Cardiac septum (tissue), 1 donor: ENCODE measurements at regions of chr2 and their contacts with region 1.

Region 1: DNA sequence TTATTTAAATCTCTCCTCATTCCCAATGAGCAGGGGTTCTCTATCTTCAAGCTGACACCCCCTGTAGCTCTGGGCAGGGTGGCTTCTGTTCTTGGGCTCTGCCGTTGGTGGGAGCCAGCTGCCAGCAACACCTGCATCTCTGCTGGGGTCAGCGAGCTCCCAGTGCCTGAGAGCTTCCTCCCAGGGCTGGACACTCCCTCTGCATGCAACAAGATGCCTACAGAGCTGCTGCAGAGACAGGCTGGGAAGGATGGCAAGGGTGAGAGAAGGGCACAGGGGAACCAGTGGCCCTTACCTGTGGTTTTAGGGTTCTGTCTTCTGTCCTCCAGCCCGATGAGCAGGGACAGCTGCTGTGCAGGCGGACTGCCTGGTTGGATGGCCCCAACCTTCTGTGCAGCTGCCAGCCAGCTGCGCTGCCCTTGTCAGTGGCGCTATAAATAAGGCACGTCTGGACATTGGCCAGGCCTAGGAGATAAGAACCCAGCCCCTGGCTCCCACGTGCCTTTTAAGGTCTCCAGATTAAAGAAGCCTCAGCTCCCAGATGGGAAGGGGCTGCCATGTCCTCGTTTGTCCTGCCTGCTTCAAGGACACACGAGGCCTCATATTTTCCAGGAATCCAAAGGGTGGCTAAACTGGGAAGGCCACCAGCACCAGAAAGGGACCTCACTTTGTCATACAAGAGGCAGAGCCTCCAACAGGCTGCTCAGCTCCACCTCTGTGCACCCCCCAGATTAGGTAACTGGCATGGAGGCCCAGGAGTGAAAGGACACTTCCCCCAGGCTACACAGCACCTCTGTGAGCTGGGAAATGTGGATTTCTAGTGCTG is 39.5 kb upstream of the FHL2 start:
- DNase-seq: peak; percentile 87

Region 2: DNA sequence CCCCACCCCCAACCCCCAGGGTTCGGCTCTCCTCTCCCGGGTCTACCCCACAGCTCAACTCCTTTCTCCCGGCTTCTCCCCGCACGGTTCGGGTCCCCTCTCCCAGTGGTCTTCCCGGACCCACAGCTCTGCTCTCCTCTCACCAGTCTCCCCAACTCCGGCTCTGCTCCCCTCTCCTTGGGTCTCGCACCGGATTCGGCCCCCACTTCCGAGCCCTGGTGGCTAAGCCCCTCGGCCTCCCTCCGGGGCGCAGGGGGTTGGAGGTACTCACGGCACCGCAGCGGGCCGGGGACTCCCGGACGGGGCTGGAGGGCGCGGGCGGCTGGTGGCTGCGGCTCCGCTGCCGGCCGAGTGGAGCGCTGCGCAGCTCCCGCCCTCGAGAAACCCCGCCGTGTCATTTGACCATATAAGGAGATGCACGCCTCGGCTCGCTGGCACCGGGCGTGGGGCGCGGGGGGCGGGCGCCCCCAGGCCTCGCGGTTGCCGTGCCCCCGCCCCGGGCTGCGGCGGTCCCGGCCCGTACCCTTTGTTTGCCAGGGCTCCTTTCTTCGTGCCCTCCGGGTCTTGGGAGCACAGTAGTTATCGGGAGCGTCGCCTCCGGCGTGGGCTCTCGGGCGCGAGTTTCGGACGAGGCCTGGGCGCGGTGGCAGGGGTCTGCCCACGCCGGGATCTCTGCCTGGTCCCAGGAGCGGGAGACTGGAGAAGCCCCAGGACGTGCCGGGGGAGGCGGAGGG is 39.5 kb before region 1 on chr2 and contains the start of gene FHL2:
- intact Hi-C with region 1: loop called (anchors 5 kb)
- DNase-seq: peak; percentile 84
- total RNA-seq, gene FHL2: 467 TPM

Region 3: DNA sequence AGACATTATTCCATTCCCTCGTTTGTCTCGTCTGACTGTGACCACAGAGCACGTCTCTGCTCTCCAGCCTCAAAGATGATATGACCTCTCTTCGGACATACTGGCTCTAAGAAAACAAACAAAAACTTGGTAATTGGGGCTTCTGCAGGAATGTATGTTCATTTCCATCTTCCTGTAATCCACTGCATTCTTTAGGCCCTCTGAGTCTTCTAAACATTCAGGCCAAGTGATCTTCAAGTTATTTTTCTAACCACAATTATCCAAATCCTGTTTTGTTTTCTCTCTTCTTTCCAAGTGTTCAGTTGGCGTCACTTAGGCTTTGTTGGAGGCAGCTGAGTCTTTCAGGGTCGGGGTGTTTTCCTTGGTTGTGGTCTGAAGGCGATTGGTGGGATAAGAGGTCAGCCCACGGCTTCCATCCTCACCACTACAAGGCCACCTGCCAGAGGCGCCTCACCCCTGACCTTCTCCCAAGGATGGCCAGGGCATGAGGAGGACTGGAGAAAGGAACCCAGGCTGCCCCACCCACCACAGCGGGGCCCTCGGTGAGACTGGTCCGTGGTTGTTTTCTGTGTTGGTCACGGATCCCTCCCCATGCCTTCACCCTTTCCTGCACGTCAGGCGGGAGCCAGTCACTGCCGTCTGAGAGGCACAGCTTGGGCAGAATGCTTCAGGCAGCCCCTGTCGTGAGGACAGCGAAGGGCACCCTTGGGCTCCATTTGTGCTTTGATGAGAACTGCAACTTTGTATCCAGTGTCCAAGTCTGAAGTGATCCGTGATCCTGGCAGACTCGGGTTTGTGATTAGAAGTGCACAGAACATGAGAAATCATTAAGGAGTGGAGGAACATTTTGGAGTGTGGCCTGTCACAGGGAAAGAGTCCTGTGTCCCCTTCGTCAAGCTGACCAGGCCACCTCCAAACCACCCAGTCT is 49.1 kb after region 1 on chr2:
- intact Hi-C with region 1: loop called (anchors 1 kb)
- DNase-seq: no peak